MCF 10A (cell line): ENCODE measurements at regions of chr1 and their contacts with region 1.

Region 1: DNA sequence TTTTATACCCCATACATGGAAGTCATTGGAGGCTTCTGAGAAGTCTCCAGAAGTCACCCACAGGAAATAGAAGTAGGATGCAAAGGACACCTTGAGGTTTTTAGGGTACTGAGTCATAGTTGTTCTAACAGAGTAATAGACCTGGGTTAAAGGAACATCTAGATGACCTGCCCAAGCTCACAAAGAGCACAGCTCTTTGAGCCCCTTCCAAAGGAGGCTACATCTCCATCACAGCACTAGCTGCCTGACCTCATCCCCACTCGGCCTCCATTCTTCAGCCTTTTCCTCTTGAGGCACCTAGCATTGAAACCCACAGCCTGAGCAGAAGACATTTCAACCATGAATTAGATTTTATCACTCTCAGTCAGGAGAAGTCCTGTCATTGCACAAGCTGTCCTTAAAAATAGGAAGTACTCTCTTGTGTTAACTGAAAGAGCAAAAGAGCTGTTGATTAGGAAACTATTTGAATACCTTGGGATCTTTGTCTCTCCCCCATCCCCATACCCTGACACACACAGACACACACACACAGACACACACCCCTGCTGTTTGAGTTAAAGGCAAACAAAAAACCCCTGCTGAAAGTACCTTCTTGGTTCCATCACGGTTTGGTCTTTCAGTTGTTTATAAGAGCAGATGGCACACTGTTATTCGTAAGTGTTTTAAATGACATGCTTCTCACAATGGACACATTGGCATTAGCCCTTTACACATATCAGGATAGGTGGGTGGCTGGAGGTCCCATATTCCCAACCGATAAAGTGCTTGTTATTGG is 22.2 kb downstream of the MKNK1 start:
- DNase-seq: no peak
- H3K4me3 Mint-ChIP-seq: no peak overlapping the region
- H3K27ac Mint-ChIP-seq: no peak overlapping the region
- H3K4me1 Mint-ChIP-seq: no peaks in the 10 kb centered on the region
- H3K27me3 Mint-ChIP-seq: no peaks in the 10 kb centered on the region
- CTCF ChIP-seq: no peak

Region 2: GRCh38 chr1:46491443-46492268 is 90.2 kb before region 1 on chr1:
- CTCF ChIA-PET with region 1: no interaction called
- POLR2A ChIA-PET with region 1: no interaction called
- intact Hi-C with region 1: no loop called
- DNase-seq: no peak
- H3K4me3 Mint-ChIP-seq: no peak overlapping the region
- H3K27ac Mint-ChIP-seq: no peak overlapping the region
- H3K4me1 Mint-ChIP-seq: peaks cover 12% of the 10 kb centered on the region
- H3K27me3 Mint-ChIP-seq: peaks cover 65% of the 10 kb centered on the region
- CTCF ChIP-seq: no peak

Region 3: DNA sequence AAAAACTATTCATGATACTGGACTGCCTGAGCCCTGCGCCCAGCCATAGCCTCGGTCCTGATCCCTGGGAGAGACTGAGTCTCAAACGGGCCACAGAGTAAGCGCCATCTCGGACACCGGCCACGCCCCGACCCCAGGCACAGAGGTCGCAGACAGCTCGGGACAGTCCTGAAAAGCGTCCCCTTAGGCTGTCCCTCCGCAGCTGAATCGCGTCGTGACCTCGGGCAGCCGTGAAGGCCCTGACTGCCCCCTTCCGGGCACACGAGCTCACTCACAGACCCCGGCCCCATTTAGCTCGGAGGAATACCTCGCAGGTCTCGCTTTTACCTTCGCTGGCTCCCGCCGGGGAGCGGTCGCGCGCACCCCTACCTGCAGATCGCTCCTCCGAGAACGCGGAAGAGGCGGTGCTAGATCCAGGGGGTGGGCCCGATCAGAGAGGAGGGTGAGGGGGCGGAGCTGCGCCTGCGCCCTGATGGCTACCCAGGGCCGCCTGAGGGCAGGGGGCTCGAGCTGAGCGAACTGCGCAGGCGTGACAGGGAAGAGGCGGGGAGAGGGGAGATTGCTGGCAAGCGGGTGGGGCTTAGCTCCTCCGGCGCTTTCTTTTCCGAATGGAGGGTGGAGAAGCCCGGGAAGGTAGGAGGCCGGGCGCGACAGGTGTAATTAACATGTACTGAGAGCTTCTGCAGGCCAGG is 22.1 kb after region 1 on chr1 and contains the start of gene MKNK1:
- CTCF ChIA-PET with region 1: interaction called, 5 read pairs
- POLR2A ChIA-PET with region 1: interaction called, 10 read pairs
- intact Hi-C with region 1: no loop called
- DNase-seq: peak; percentile 97
- H3K4me3 Mint-ChIP-seq: peak within 1 kb of the TSS; percentile 91
- H3K27ac Mint-ChIP-seq: peak within 1 kb of the TSS; percentile 80
- H3K4me1 Mint-ChIP-seq: peaks cover 17% of the 10 kb centered on the region
- H3K27me3 Mint-ChIP-seq: no peaks in the 10 kb centered on the region
- CTCF ChIP-seq: peak; percentile 7
- total RNA-seq, gene MKNK1: 25.6 and 33.7 TPM in 2 replicates

Region 4: DNA sequence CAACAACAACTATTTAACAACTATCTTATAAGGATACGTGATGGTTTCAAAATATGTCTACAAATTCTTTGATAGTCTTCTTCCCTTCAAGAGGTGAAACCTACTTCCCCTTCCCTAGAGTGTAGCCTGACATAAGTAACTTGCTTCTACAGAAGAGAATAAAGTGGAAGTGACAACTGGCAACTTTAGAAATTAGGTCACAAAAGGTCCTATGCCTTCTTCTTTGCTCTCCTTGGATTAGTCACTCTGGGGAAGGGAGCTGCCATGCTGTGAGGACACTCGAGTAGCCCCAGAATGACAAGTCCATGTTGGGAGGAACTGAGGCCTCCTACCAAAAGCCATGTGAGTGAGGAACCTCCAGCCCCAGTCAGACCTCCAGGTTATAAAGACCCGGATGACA is 117.8 kb after region 1 on chr1:
- CTCF ChIA-PET with region 1: no interaction called
- POLR2A ChIA-PET with region 1: no interaction called
- intact Hi-C with region 1: no loop called
- DNase-seq: no peak
- H3K4me3 Mint-ChIP-seq: no peak overlapping the region
- H3K27ac Mint-ChIP-seq: no peak overlapping the region
- H3K4me1 Mint-ChIP-seq: no peaks in the 10 kb centered on the region
- H3K27me3 Mint-ChIP-seq: no peaks in the 10 kb centered on the region
- CTCF ChIP-seq: no peak